HAP-1 (cell line): ENCODE measurements at regions of chr11 and their contacts with region 1.

Region 1: GRCh38 chr11:30855383-30856006 is 269.3 kb upstream of the MPPED2 start:
- DNase-seq: peak in 1 of 2 experiments; percentile 64
- H3K4me3 ChIP-seq: no peak overlapping the region
- H3K4me1 ChIP-seq: no peaks in the 10 kb centered on the region
- H3K27me3 ChIP-seq: no peaks in the 10 kb centered on the region

Region 2: DNA sequence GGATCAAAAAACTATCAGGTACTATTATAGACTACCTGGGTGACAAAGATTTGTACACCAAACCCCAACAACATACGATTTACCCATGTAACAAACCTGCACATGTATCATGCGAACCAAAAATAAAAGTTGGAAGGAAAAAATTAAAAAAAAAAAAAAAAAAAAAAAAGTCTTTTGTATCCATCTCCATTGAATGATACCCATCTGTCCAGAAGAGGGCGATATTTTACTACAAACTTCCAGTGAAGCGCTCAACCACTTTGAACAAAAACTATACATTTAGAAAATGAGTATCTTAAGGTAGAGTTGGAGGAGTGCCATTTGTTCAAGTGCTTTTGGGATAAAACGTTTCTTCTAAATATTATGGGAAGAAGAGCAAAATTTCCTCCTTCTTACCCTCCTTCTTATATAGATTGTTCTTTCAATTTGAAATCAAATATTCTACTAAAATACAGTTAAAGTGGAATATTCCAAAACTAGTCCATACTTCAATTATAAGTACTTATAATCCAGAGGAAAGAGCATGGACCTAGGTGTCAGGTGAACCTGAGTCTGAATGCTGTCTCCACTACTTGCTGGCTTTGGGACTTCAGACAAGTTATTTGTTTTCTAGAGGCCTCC is 509.3 kb before region 1 on chr11:
- in situ Hi-C with region 1: loop called (anchors 10 kb)
- DNase-seq: peak; percentile 17 to 74
- H3K4me3 ChIP-seq: no peak overlapping the region
- H3K4me1 ChIP-seq: no peaks in the 10 kb centered on the region
- H3K27me3 ChIP-seq: no peaks in the 10 kb centered on the region

Region 3: DNA sequence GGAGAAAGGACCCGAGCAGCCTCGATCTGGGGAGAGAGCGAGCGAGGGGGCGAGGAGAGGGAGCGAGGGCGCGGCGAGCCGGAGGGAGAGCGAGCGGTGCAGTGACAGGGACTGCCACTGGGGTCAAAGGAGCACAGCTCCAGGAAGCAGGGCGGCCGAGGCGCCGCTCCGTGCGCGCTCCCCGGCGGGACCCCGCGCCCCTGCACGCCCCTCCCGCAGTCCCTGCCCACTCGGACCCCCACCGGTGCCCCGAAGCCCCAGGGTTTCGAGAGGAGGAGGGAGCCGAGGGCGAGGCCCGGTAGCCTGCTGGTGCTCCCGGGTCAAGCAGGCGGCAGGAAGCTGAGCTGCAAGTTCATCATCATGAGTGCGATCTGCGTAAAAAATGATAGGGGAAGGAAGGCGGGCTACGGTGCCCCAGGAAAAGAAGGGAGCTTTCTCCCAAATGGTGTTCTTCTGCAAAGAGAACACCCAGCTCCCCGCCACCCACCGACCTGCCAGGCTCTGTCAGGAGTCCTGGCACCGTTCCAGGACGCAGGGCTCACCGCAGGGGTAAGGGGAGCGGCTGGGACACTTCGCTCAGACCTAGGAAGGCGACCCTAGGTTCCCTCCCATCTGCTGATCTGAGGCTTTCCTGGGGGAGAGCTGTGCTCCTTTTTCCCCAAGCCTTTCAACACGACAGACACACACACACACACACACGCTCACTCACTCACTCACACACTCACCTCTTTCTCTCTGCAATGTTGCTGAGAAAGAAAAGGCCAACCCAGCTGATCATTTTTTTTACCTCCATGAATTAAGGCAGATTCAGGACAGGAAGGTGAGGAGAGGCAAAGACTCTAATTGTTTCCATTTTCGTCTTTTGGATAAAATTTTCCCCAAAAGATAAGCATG is 269.0 kb before region 1 on chr11 and contains the start of gene MPPED2:
- in situ Hi-C with region 1: loop called (anchors 10 kb)
- DNase-seq: peak; percentile 79 to 83
- H3K4me3 ChIP-seq: peak within 1 kb of the TSS; percentile 62
- H3K4me1 ChIP-seq: peaks cover 35% of the 10 kb centered on the region
- H3K27me3 ChIP-seq: no peaks in the 10 kb centered on the region